ENCODE measurements at regions of chr19 and their contacts with region 1.

Region 1: GRCh38 chr19:35154525-35155406 is at the start of gene FXYD5:
- DNase-seq: peak; percentile 90
- H3K4me3 Mint-ChIP-seq: peak within 1 kb of the TSS; percentile 100
- H3K27ac Mint-ChIP-seq: peak within 1 kb of the TSS; percentile 100
- H3K4me1 Mint-ChIP-seq: peaks cover 45% of the 10 kb centered on the region
- H3K27me3 Mint-ChIP-seq: peaks cover 4% of the 10 kb centered on the region
- total RNA-seq, gene FXYD5: 273 and 286 TPM in 2 replicates

Region 2: DNA sequence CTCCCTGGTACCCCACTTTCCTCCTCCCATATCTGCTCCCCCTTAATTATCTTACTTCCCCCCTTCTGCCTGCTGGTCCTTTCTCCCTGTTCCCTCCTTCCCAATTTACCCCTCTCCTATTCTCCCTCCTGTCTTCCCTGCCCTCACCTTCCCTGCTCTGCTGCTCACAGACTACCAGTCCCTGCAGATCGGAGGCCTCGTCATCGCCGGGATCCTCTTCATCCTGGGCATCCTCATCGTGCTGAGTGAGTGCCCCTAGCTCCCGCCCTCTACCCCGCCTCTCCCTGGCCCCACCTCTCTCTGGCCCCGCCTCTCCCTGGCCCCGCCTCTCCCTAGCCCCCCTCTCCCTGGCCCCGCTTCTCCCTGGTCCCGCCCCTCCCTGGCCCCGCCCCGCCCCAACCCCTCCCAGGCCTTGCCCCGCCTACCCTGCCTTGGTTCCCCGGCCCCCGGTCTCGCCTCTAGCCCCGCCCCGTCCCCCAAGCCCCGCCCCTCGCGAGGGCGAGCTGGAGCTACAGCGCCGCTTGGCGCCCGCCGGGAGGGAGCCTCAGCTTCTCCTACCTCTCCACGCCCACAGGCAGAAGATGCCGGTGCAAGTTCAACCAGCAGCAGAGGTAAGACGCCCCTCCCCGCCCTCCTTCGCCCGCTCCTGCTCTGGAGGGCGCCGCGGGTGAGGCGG is 13.7 kb before region 1 on chr19:
- intact Hi-C with region 1: loop called (anchors 1 kb)
- DNase-seq: peak; percentile 97
- H3K4me3 Mint-ChIP-seq: peak overlapping the region; percentile 87
- H3K27ac Mint-ChIP-seq: peak overlapping the region; percentile 83
- H3K4me1 Mint-ChIP-seq: peaks cover 31% of the 10 kb centered on the region
- H3K27me3 Mint-ChIP-seq: peaks cover 23% of the 10 kb centered on the region

Region 3: DNA sequence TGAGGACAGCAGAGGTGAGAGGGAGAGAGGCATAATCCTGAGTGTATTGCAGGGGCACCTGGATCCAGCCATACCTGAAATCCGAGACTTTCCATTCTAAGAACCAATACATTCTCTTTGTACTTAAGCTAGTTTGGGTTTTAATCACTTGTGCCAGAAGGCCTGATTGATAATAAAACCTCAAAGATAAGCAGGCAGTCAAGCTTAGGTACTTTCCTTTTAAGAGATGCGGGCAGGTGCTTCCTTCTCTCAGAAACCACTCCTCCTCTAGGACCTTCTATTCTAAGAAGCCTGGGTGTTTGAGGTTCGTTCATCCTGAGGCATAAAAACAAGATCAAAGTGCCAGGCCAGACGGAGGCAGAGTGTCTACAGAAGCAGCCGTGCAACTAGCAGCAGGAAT is 51.6 kb after region 1 on chr19:
- intact Hi-C with region 1: loop called (anchors 1 kb)
- DNase-seq: peak; percentile 90
- H3K4me3 Mint-ChIP-seq: peak overlapping the region; percentile 74
- H3K27ac Mint-ChIP-seq: peak overlapping the region; percentile 96
- H3K4me1 Mint-ChIP-seq: peaks cover 67% of the 10 kb centered on the region
- H3K27me3 Mint-ChIP-seq: no peaks in the 10 kb centered on the region

Region 4: GRCh38 chr19:35269421-35270117 is 114.8 kb after region 1 on chr19:
- intact Hi-C with region 1: loop called (anchors 2 kb)
- DNase-seq: peak; percentile 92
- H3K4me3 Mint-ChIP-seq: peak overlapping the region; percentile 73
- H3K27ac Mint-ChIP-seq: peak overlapping the region; percentile 71
- H3K4me1 Mint-ChIP-seq: peaks cover 14% of the 10 kb centered on the region
- H3K27me3 Mint-ChIP-seq: no peaks in the 10 kb centered on the region

Region 5: GRCh38 chr19:35501684-35502083 is 346.9 kb after region 1 on chr19:
- intact Hi-C with region 1: no loop called
- DNase-seq: no peak
- H3K4me3 Mint-ChIP-seq: no peak overlapping the region
- H3K27ac Mint-ChIP-seq: no peak overlapping the region
- H3K4me1 Mint-ChIP-seq: peaks cover 2% of the 10 kb centered on the region
- H3K27me3 Mint-ChIP-seq: peaks cover 20% of the 10 kb centered on the region